Panc1 (cell line): ENCODE measurements at regions of chr2 and their contacts with region 1.

Region 1: DNA sequence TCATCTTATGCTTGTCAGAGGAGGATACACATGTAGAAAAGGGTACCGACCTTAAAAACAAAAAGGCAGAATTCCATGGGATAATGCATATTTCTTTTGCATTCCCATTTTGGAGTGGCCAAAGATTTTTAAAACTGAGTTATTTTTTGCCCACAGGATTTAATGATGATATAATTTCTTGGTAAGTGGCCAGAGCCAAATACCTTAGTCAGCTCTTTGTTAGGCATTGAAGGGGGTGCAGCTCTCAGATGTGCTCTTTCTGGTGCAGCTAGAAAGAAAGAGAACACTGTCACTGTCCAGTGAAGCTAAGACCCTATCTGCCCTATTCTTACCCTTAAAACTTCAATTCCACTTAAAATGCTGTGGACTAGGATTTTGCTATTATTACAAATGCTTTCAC is 10.8 kb downstream of the COQ10B start:
- DNase-seq: no peak
- ATAC-seq: no peak
- H3K4me3 ChIP-seq: no peak overlapping the region
- H3K27ac ChIP-seq: no peak overlapping the region
- H3K4me1 ChIP-seq: no peaks in the 10 kb centered on the region
- H3K27me3 ChIP-seq: no peaks in the 10 kb centered on the region
- CTCF ChIP-seq: no peak

Region 2: DNA sequence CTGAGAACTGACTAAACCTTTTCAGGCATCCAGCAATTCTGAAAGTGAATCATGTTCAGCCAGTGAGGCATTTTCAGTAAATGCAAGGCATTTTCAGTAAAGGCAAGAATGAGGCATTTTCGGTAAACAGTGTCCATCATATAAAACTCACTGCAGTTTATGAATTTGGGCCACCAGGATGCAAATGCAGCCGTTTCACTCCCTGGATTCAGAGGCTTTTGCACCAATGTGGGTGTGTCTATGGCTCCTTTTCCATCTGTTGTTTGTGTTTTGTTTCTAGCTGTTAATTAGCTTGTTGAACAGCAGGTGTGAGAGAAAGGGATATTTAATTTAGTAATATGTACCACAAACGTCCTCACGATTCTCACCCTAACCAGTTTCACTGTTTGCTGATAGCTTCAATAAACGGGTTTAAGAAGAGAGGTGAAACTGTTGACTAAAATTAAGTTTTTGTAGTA is 421.4 kb before region 1 on chr2:
- CTCF ChIA-PET with region 1: no interaction called
- POLR2A ChIA-PET with region 1: interaction called, 14 read pairs
- in situ Hi-C with region 1: no loop called
- intact Hi-C with region 1: no loop called
- DNase-seq: no peak
- ATAC-seq: no peak
- H3K4me3 ChIP-seq: no peak overlapping the region
- H3K27ac ChIP-seq: no peak overlapping the region
- H3K4me1 ChIP-seq: no peaks in the 10 kb centered on the region
- H3K27me3 ChIP-seq: no peaks in the 10 kb centered on the region
- CTCF ChIP-seq: no peak

Region 3: DNA sequence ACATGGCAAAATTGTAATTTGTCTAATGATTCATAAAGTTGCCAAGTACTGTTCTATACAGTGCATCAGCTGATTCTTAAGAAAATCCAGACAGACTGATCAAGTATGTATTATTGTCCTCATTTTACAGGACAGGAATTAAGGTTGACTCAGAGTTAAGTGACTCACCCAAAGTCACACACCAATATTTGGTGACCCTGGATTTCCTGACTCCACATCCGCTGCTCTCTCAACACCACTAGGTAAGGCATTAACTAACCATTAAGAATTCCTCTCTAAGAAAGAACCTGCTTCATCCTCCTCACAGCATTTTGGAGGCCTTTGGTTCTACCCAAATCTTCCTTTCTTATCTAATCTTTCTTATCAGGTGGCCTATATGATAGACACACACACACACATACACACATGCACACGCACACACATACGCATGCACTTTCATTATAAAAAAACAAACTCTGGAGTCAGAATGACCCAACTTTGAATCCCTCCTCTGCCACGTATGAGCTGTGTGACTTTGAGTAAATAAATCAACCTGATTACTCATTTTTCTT is 304.4 kb before region 1 on chr2:
- CTCF ChIA-PET with region 1: no interaction called
- POLR2A ChIA-PET with region 1: no interaction called
- in situ Hi-C with region 1: no loop called
- intact Hi-C with region 1: no loop called
- DNase-seq: peak; percentile 96
- ATAC-seq: peak; percentile 95
- H3K4me3 ChIP-seq: no peak overlapping the region
- H3K27ac ChIP-seq: peak overlapping the region; percentile 54
- H3K4me1 ChIP-seq: peaks cover 30% of the 10 kb centered on the region
- H3K27me3 ChIP-seq: no peaks in the 10 kb centered on the region
- CTCF ChIP-seq: no peak